Caco-2 (cell line): ENCODE measurements at regions of chr5 and their contacts with region 1.

Region 1: GRCh38 chr5:125011014-125011413 is 264.6 kb upstream of the ZNF608 start:
- DNase-seq: no peak
- H3K4me3 ChIP-seq: no peak overlapping the region
- H3K4me3 Mint-ChIP-seq: peak overlapping the region; percentile 36
- H3K27ac Mint-ChIP-seq: peak overlapping the region; percentile 83
- H3K4me1 ChIP-seq: peaks cover 60% of the 10 kb centered on the region
- H3K4me1 Mint-ChIP-seq: peaks cover 20% of the 10 kb centered on the region
- H3K27me3 ChIP-seq: no peaks in the 10 kb centered on the region
- H3K27me3 Mint-ChIP-seq: no peaks in the 10 kb centered on the region
- CTCF ChIP-seq: peak in 1 of 2 experiments; percentile 4

Region 2: GRCh38 chr5:124524552-124525232 is 486.3 kb before region 1 on chr5:
- CTCF ChIA-PET with region 1: no interaction called
- POLR2A ChIA-PET with region 1: no interaction called
- intact Hi-C with region 1: loop called (anchors 5 kb)
- DNase-seq: no peak
- H3K4me3 ChIP-seq: no peak overlapping the region
- H3K4me3 Mint-ChIP-seq: no peak overlapping the region
- H3K27ac Mint-ChIP-seq: peak overlapping the region; percentile 14
- H3K4me1 ChIP-seq: peaks cover 26% of the 10 kb centered on the region
- H3K4me1 Mint-ChIP-seq: peaks cover 25% of the 10 kb centered on the region
- H3K27me3 ChIP-seq: no peaks in the 10 kb centered on the region
- H3K27me3 Mint-ChIP-seq: no peaks in the 10 kb centered on the region
- CTCF ChIP-seq: no peak

Region 3: GRCh38 chr5:124996764-124997077 is 14.3 kb before region 1 on chr5:
- CTCF ChIA-PET with region 1: interaction called, 3 read pairs
- POLR2A ChIA-PET with region 1: interaction called, 3 read pairs
- intact Hi-C with region 1: loop called (anchors 1 kb)
- DNase-seq: peak in 1 of 2 experiments; percentile 59
- H3K4me3 ChIP-seq: no peak overlapping the region
- H3K4me3 Mint-ChIP-seq: peak overlapping the region; percentile 52
- H3K27ac Mint-ChIP-seq: peak overlapping the region; percentile 93
- H3K4me1 ChIP-seq: peaks cover 49% of the 10 kb centered on the region
- H3K4me1 Mint-ChIP-seq: peaks cover 39% of the 10 kb centered on the region
- H3K27me3 ChIP-seq: no peaks in the 10 kb centered on the region; the same call in 1 of the 2 replicates
- H3K27me3 Mint-ChIP-seq: no peaks in the 10 kb centered on the region
- CTCF ChIP-seq: no peak

Region 4: DNA sequence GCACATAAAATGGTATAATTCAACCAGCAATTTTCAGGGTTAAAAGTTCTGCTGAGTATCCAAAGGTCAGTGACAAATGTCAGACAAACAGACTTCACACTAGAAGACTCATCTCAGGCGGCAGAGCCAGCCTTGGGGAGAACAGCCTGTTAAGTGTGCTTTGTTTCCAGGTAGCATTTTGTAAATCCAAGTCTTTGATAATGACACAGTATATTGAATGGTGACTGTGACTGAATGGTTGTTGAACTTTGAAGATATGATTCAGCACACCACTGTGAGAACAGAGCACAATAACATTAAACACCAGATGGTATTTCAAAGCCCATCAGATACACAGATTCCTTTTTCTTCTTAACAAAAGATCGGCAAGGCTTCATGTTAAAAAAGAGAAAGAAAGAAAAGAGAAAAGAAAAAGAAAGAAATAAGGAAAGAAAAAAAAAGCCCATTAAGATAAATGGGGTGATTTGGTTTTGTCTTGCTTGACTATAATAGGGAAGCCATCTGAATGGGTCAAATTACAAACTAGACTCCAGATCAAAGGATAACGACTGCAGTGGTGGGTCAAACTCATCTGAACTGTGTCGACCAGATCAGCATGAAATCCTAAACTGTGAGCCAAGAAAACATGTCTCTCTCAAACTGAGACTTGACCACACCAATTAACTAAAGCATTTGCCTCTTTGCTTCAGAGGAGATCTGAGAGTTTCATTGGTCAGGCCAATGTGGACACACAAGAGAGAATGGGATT is 48.4 kb after region 1 on chr5:
- CTCF ChIA-PET with region 1: no interaction called
- POLR2A ChIA-PET with region 1: no interaction called
- intact Hi-C with region 1: loop called (anchors 1 kb)
- DNase-seq: peak in 1 of 2 experiments; percentile 4
- H3K4me3 ChIP-seq: no peak overlapping the region
- H3K4me3 Mint-ChIP-seq: peak overlapping the region; percentile 19
- H3K27ac Mint-ChIP-seq: peak overlapping the region; percentile 37
- H3K4me1 ChIP-seq: peaks cover 11% of the 10 kb centered on the region
- H3K4me1 Mint-ChIP-seq: peaks cover 13% of the 10 kb centered on the region
- H3K27me3 ChIP-seq: no peaks in the 10 kb centered on the region
- H3K27me3 Mint-ChIP-seq: no peaks in the 10 kb centered on the region
- CTCF ChIP-seq: no peak

Region 5: DNA sequence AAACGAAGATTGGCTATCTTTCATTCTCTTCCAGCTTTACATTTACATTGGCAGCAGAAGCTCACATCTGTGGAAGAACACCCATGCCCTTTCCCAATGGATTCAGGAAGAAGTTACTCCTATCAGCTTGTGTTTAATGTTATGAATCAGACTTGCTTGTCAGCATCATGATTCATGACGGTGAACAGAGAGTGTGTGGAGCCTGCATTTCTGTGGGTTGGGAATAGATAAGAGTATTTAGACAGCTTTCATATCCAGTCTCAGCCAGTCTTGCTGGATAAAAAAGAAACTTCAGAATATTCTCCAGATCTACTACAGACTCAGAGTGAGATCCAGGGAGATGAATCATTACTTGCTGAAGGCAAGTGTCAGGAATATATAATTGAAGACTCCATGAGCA is 548.3 kb after region 1 on chr5:
- CTCF ChIA-PET with region 1: no interaction called
- POLR2A ChIA-PET with region 1: no interaction called
- intact Hi-C with region 1: loop called (anchors 10 kb)
- DNase-seq: peak; percentile 37 to 56
- H3K4me3 ChIP-seq: no peak overlapping the region
- H3K4me3 Mint-ChIP-seq: no peak overlapping the region
- H3K27ac Mint-ChIP-seq: no peak overlapping the region
- H3K4me1 ChIP-seq: peaks cover 22% of the 10 kb centered on the region
- H3K4me1 Mint-ChIP-seq: peaks cover 18% of the 10 kb centered on the region
- H3K27me3 ChIP-seq: no peaks in the 10 kb centered on the region
- H3K27me3 Mint-ChIP-seq: no peaks in the 10 kb centered on the region
- CTCF ChIP-seq: no peak